GM13976 (cell line): ENCODE measurements at regions of chr1 and their contacts with region 1.

Region 1: DNA sequence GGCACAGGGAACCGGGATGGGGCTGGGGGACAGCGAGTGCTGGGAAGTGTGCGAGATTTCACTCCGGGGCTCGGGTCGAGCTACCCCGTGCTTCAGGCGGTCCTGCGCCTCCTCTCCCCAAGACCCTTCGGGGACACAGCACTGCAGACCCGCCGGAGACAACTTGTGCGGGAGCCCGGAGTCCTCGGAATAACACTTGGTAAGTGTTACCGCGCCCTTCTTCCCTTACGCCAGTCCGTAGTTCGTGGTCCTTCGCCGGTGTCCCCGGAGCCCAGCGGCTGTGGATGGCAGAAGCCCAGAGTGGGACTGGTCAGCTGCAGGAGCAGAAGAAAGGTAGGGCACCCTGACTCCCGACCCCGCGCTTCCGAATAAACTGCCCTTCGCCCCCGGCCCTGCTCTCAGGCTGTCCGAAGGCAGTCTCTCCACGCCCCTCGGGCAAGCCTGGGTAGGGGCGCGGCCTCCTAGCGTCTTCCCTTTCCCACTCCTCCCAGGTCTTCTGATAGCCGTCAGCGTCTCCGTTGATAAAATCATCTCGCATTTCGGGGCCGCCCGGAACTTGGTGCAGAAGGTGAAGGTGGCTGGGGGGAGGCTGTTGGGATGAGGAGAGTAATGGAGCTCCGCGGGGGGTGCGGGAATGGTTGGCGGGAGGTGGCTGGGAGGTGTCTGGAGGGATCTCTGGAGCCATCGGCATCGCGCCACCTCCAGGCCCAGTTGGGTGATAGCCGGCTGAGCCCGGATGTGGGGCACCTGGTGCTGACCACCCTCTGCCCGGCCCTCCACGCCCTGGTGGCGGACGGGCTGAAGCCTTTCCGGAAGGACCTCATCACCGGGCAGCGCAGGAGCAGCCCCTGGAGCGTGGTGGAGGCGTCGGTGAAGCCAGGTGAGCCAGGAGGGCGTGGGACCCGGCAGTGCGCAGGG is 4.2 kb downstream of the RUSC1 start:
- DNase-seq: peak; percentile 52
- CTCF ChIP-seq: peak; percentile 33

Region 2: GRCh38 chr1:154847891-154848290 is 477.0 kb before region 1 on chr1:
- in situ Hi-C with region 1: no loop called
- DNase-seq: no peak
- CTCF ChIP-seq: no peak

Region 3: GRCh38 chr1:155591770-155592169 is 266.9 kb after region 1 on chr1:
- in situ Hi-C with region 1: loop called (anchors 25 kb)
- DNase-seq: peak; percentile 67
- CTCF ChIP-seq: peak; percentile 48